AG04450 (cell line): ENCODE measurements at regions of chr1 and their contacts with region 1.

Region 1: GRCh38 chr1:226626577-226626956 is 78.0 kb downstream of the STUM start:
- DNase-seq: no peak
- H3K4me3 ChIP-seq: no peak overlapping the region
- H3K27ac ChIP-seq: no peak overlapping the region
- H3K27me3 ChIP-seq: peaks cover 9% of the 10 kb centered on the region
- CTCF ChIP-seq: peak; percentile 92

Region 2: GRCh38 chr1:226611301-226611700 is 15.3 kb before region 1 on chr1:
- CTCF ChIA-PET with region 1: interaction called, 26 read pairs
- POLR2A ChIA-PET with region 1: no interaction called
- DNase-seq: no peak
- H3K4me3 ChIP-seq: no peak overlapping the region
- H3K27ac ChIP-seq: no peak overlapping the region
- H3K27me3 ChIP-seq: peaks cover 30% of the 10 kb centered on the region
- CTCF ChIP-seq: no peak

Region 3: GRCh38 chr1:226679853-226680516 is 53.4 kb after region 1 on chr1:
- CTCF ChIA-PET with region 1: interaction called, 10 read pairs
- POLR2A ChIA-PET with region 1: no interaction called
- DNase-seq: no peak
- H3K4me3 ChIP-seq: peak overlapping the region; percentile 58
- H3K27ac ChIP-seq: peak overlapping the region; percentile 68
- H3K27me3 ChIP-seq: peaks cover 5% of the 10 kb centered on the region
- CTCF ChIP-seq: no peak; the same call in 1 of the 2 replicates

Region 4: GRCh38 chr1:226820941-226821718 is 194.6 kb after region 1 on chr1:
- CTCF ChIA-PET with region 1: interaction called, 138 read pairs
- POLR2A ChIA-PET with region 1: no interaction called
- DNase-seq: peak; percentile 96
- H3K4me3 ChIP-seq: 0 out of 2 replicates have a peak overlapping the region, but pooled peaks have one; percentile 10
- H3K27ac ChIP-seq: peak overlapping the region; percentile 94
- H3K27me3 ChIP-seq: peaks cover 6% of the 10 kb centered on the region
- CTCF ChIP-seq: no peak

Region 5: GRCh38 chr1:226846801-226847200 is 220.2 kb after region 1 on chr1:
- CTCF ChIA-PET with region 1: interaction called, 10 read pairs
- POLR2A ChIA-PET with region 1: no interaction called
- DNase-seq: no peak
- H3K4me3 ChIP-seq: no peak overlapping the region
- H3K27ac ChIP-seq: no peak overlapping the region
- H3K27me3 ChIP-seq: peaks cover 2% of the 10 kb centered on the region
- CTCF ChIP-seq: no peak